B cell (primary cell): ENCODE measurements at regions of chr2 and their contacts with region 1.

Region 1: DNA sequence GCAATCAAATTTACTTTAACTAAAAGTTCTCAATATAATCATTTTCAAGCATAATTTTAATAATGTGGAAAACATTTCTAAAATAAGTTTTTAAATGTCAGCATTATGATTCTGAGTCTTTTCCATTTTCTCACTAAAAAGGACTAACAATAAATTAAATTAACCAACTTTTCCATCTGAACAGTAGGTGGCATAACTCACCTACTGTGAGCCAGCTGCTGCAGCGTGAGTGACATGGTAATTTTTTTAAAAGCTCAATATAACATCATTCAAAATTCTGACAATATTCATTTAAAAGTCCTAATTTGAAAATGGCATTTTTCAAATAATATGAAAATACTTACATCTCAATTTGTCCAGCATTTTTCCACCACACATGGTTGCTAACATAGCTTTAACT is 66.5 kb downstream of the DTNB start:
- DNase-seq: peak; percentile 56
- ATAC-seq: no peak
- H3K4me3 ChIP-seq: no peak overlapping the region
- H3K4me3 Mint-ChIP-seq: no peak overlapping the region
- H3K27ac ChIP-seq: no peak overlapping the region
- H3K27ac Mint-ChIP-seq: no peak overlapping the region
- H3K4me1 ChIP-seq: peaks cover 16 to 22% of the 10 kb centered on the region in 2 donors
- H3K4me1 Mint-ChIP-seq: peaks cover 30% of the 10 kb centered on the region
- H3K27me3 ChIP-seq: no peaks in the 10 kb centered on the region
- H3K27me3 Mint-ChIP-seq: no peaks in the 10 kb centered on the region
- CTCF ChIP-seq: peak; percentile 84

Region 2: GRCh38 chr2:25596516-25597244 is 10.2 kb before region 1 on chr2:
- CTCF ChIA-PET with region 1: interaction called, 14 read pairs
- POLR2A ChIA-PET with region 1: no interaction called
- intact Hi-C with region 1: no loop called
- DNase-seq: no peak
- ATAC-seq: no peak
- H3K4me3 ChIP-seq: no peak overlapping the region
- H3K4me3 Mint-ChIP-seq: no peak overlapping the region
- H3K27ac ChIP-seq: no peak overlapping the region
- H3K27ac Mint-ChIP-seq: no peak overlapping the region
- H3K4me1 ChIP-seq: peaks cover 0 to 8% of the 10 kb centered on the region in 2 donors
- H3K4me1 Mint-ChIP-seq: peaks cover 11% of the 10 kb centered on the region
- H3K27me3 ChIP-seq: no peaks in the 10 kb centered on the region
- H3K27me3 Mint-ChIP-seq: no peaks in the 10 kb centered on the region
- CTCF ChIP-seq: no peak

Region 3: DNA sequence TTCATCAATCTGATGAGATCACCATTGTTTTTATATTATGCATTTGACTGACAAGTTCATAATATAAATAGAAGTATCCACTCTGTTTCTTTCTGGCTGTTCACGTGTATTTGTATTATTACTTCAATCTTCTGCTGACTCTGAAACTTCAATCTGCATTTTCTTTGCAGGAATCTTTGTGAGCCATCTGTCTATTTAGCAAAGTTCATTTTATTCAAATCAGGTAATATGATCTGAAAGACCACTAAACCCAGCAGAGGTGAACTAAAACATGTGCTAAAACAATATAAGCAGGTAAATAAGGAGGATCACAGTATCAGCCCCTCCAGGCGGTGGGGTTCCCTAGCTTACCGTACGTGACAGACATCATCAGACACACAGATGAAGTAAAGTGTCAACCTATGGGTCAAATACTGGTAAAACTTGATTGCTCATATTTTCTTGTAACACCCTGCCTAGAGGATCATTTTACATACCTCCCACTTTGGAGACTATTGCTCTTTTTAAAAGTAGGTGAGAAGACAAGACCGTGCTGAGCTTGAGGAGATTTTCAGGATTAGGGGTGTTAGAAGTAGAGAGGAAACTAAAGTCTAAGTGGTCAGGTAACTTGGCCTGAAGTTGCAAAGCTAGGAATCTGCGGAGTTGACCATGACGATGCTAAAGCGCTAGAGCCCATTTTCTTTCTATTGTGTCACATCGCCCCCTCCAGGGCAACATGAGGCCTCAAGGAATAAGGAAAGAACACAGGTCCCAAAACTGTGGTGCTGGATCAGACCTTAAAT is 57.5 kb after region 1 on chr2:
- CTCF ChIA-PET with region 1: interaction called, 74 read pairs
- POLR2A ChIA-PET with region 1: interaction called, 3 read pairs
- intact Hi-C with region 1: loop called (anchors 1 kb)
- DNase-seq: peak; percentile 61
- ATAC-seq: peak; percentile 43
- H3K4me3 ChIP-seq: peak overlapping the region in 1 of 5 experiments; percentile 27
- H3K4me3 Mint-ChIP-seq: peak overlapping the region; percentile 64
- H3K27ac ChIP-seq: no peak overlapping the region
- H3K27ac Mint-ChIP-seq: no peak overlapping the region
- H3K4me1 ChIP-seq: peaks cover 0 to 8% of the 10 kb centered on the region in 2 donors
- H3K4me1 Mint-ChIP-seq: peaks cover 4% of the 10 kb centered on the region
- H3K27me3 ChIP-seq: no peaks in the 10 kb centered on the region
- H3K27me3 Mint-ChIP-seq: no peaks in the 10 kb centered on the region
- CTCF ChIP-seq: peak; percentile 62

Region 4: GRCh38 chr2:25700221-25700660 is 93.3 kb after region 1 on chr2:
- CTCF ChIA-PET with region 1: interaction called, 155 read pairs
- POLR2A ChIA-PET with region 1: no interaction called
- intact Hi-C with region 1: no loop called
- DNase-seq: peak; percentile 51
- ATAC-seq: peak; percentile 57
- H3K4me3 ChIP-seq: no peak overlapping the region
- H3K4me3 Mint-ChIP-seq: no peak overlapping the region
- H3K27ac ChIP-seq: no peak overlapping the region
- H3K27ac Mint-ChIP-seq: no peak overlapping the region
- H3K4me1 ChIP-seq: no peaks in the 10 kb centered on the region
- H3K4me1 Mint-ChIP-seq: peaks cover 2% of the 10 kb centered on the region
- H3K27me3 ChIP-seq: no peaks in the 10 kb centered on the region
- H3K27me3 Mint-ChIP-seq: no peaks in the 10 kb centered on the region
- CTCF ChIP-seq: peak; percentile 80

Region 5: GRCh38 chr2:26144953-26145680 is 538.2 kb after region 1 on chr2:
- CTCF ChIA-PET with region 1: no interaction called
- POLR2A ChIA-PET with region 1: no interaction called
- intact Hi-C with region 1: loop called (anchors 10 kb)
- DNase-seq: peak; percentile 69
- ATAC-seq: peak; percentile 73
- H3K4me3 ChIP-seq: no peak overlapping the region
- H3K4me3 Mint-ChIP-seq: peak overlapping the region; percentile 24
- H3K27ac ChIP-seq: no peak overlapping the region
- H3K27ac Mint-ChIP-seq: no peak overlapping the region
- H3K4me1 ChIP-seq: no peaks in the 10 kb centered on the region
- H3K4me1 Mint-ChIP-seq: no peaks in the 10 kb centered on the region
- H3K27me3 ChIP-seq: peaks cover 0 to 3% (median 0%) of the 10 kb centered on the region in 4 experiments
- H3K27me3 Mint-ChIP-seq: peaks cover 10% of the 10 kb centered on the region
- CTCF ChIP-seq: peak; percentile 75